Aorta (tissue), 5 donors: ENCODE measurements at regions of chr11 and their contacts with region 1.

Region 1: DNA sequence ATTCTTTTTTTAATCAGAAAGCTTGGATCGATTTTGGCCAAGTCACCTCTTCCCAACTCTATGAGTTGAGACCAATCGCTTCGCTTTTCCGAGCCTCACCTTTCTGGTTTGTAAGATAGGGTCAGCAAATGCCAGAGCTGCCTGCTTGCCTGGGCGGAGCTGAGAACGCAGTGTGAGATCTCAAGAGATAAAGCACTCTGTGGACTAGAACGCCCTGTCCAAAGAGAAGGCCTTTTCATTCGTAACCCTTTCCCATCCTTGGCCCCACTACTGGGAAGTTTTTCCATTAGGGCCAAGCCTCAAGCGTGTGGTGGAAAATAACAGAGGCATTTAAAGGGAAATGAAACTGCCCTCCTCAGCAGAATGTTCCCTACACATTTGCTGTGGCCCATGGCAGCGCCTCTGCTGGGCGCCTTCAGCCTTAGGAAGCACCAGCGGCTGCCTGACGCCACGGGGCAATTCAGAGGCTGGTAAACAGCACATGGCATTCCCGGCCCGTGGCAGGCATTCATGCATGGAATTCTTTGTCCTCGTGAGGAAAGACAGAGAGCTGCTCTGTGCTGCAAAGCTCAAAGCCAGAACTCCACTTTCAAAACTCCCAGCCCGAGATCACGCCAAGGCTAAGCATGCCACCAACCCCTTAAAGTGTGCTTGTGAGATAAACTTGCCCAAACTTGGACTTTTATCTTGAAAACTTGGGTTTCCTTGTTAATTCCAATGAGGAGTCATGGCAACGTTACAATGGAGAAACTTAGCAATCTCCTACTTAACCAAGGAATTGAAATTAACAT is 38.1 kb downstream of the AHNAK start:
- DNase-seq: peak; percentile 89 to 91
- ATAC-seq: peak; percentile 86
- H3K4me3 ChIP-seq: no peak overlapping the region
- H3K27ac ChIP-seq: peak overlapping the region in 1 of 2 donors; percentile 79
- H3K4me1 ChIP-seq: no peaks in the 10 kb centered on the region
- H3K27me3 ChIP-seq: no peaks in the 10 kb centered on the region

Region 2: GRCh38 chr11:62324738-62325556 is 183.5 kb before region 1 on chr11:
- intact Hi-C with region 1: no loop called
- DNase-seq: peak in 1 of 2 donors; percentile 65
- ATAC-seq: no peak
- H3K4me3 ChIP-seq: no peak overlapping the region
- H3K27ac ChIP-seq: no peak overlapping the region
- H3K4me1 ChIP-seq: no peaks in the 10 kb centered on the region
- H3K27me3 ChIP-seq: no peaks in the 10 kb centered on the region

Region 3: DNA sequence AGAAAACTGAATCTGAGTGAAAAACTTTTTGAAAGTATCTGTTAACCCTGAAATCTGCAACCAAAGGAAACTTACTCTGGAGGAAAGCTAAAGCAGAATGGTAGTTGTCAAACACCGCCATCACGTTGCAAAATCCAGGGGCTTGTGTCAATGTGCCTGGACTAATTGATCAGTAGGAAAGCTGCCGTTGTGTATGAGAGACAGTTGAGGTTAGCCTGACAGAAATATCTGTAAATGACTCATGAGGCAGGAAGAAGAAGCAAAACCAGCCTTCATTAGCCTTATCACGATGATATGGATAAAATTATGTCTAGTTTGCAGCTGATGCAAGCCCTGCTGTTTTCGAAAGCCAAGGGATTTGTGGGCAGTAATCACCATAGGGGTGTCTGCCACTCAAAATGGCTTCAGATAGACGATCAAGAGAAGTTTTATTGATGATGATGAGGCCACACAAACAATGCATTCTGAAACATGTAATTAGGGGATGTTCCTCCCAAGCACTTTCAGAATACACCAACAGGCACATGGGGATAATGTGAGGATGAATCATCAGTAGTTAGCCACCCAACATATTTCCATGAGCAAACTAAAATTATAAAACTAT is 80.7 kb before region 1 on chr11:
- intact Hi-C with region 1: loop called in 1 of 2 experiments (anchors 5 kb)
- DNase-seq: no peak
- ATAC-seq: no peak
- H3K4me3 ChIP-seq: no peak overlapping the region
- H3K27ac ChIP-seq: no peak overlapping the region
- H3K4me1 ChIP-seq: no peaks in the 10 kb centered on the region
- H3K27me3 ChIP-seq: no peaks in the 10 kb centered on the region

Region 4: GRCh38 chr11:62444236-62444833 is 64.1 kb before region 1 on chr11:
- intact Hi-C with region 1: loop called in 1 of 2 experiments (anchors 5 kb)
- DNase-seq: peak; percentile 87 to 92
- ATAC-seq: peak; percentile 72
- H3K4me3 ChIP-seq: peak overlapping the region; percentile 1 to 22
- H3K27ac ChIP-seq: peak overlapping the region; percentile 65 to 76
- H3K4me1 ChIP-seq: no peaks in the 10 kb centered on the region
- H3K27me3 ChIP-seq: no peaks in the 10 kb centered on the region